ENCODE measurements at regions of chr15 and their contacts with region 1.

Region 1: DNA sequence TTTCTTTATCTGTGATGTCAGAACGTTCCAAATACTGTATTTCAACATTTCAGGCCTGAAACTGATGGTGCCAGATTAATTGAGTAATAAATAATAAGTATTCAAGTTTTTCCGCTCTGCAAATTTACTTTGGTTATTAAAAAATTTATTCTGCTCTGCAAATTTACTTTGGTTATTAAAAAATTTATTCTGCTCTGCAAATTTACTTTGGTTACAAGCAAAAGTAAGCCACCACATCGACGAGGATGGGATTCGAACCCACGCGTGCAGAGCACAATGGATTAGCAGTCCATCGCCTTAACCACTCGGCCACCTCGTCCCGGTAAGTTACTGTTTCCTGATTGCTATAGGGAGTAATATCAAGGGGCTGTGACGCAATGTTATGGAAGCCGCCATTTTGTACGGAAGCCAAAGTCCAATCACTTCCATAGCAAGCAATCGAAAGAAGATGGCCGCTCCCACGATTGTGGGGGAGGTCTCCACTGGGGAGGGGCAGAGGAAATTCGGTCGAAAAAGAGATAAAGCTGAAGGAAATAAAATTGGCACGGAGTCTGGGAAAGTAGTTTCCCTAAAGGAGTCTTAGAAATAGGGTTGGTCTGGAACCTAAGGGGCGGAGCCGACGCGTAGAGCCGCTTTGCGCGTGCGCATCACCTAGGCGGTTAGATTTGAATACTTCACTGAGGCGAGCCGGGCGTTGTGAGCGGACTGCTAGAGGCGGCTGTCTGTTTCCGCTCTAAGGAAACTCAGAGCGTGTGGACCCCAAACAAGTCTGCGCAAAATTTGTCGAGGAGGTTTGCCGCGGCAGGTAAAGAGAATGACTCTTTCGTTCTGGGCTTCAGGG is at the start of gene KNL1:
- DNase-seq: peak; percentile 84
- ATAC-seq: peak; percentile 83
- H3K4me3 Mint-ChIP-seq: peak within 1 kb of the TSS; percentile 95
- H3K27ac Mint-ChIP-seq: peak within 1 kb of the TSS; percentile 99
- H3K4me1 Mint-ChIP-seq: peaks cover 21% of the 10 kb centered on the region
- H3K27me3 Mint-ChIP-seq: peaks cover 2% of the 10 kb centered on the region
- CTCF ChIP-seq: no peak
- total RNA-seq, gene KNL1: 5.1 and 7.7 TPM in 2 replicates

Region 2: GRCh38 chr15:40513609-40514008 is 80.2 kb before region 1 on chr15:
- CTCF ChIA-PET with region 1: interaction called, 24 read pairs
- POLR2A ChIA-PET with region 1: no interaction called
- intact Hi-C with region 1: loop called (anchors 2 kb)
- DNase-seq: no peak
- ATAC-seq: no peak
- H3K4me3 Mint-ChIP-seq: no peak overlapping the region
- H3K27ac Mint-ChIP-seq: no peak overlapping the region
- H3K4me1 Mint-ChIP-seq: peaks cover 20% of the 10 kb centered on the region
- H3K27me3 Mint-ChIP-seq: no peaks in the 10 kb centered on the region
- CTCF ChIP-seq: no peak

Region 3: DNA sequence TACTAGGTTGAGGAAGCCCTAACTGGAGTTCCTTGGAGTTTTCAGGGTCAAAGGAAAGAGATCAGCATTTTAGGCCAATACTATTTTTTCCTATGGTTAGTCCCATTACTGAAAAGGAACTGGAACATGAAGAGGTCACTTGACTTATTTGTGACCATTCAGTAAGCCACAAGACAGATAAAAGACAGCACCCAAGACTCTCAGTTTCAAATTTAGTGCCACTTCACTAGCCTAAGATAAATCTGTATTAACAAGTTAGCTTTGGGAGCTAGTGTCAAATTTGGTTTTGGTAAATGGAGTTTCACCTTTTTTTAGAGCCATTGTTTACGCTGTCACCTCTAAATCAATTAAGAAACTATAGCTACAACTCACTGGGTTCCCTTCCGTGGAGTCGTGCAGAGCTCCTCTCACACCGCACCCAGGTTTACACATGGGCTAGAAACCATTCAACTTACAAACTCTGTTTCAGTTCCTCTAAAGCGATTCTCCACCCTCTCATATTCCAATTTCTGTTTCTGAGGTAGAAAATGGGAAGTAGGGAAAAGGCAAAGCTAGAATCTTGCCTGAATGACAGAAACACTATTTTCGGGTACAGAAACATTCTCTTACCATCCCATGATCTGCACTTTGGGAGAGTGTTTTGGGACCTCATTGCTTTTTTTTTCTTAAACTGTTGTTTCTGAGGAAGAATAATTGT is 43.3 kb before region 1 on chr15:
- CTCF ChIA-PET with region 1: interaction called, 3 read pairs
- POLR2A ChIA-PET with region 1: interaction called, 4 read pairs
- intact Hi-C with region 1: loop called (anchors 1 kb)
- DNase-seq: no peak
- ATAC-seq: peak; percentile 84
- H3K4me3 Mint-ChIP-seq: peak overlapping the region; percentile 76
- H3K27ac Mint-ChIP-seq: peak overlapping the region; percentile 93
- H3K4me1 Mint-ChIP-seq: peaks cover 92% of the 10 kb centered on the region
- H3K27me3 Mint-ChIP-seq: no peaks in the 10 kb centered on the region
- CTCF ChIP-seq: no peak

Region 4: GRCh38 chr15:40684381-40684780 is 90.6 kb after region 1 on chr15:
- CTCF ChIA-PET with region 1: no interaction called
- POLR2A ChIA-PET with region 1: interaction called, 4 read pairs
- intact Hi-C with region 1: loop called (anchors 2 kb)
- DNase-seq: no peak
- ATAC-seq: no peak
- H3K4me3 Mint-ChIP-seq: no peak overlapping the region
- H3K27ac Mint-ChIP-seq: no peak overlapping the region
- H3K4me1 Mint-ChIP-seq: peaks cover 15% of the 10 kb centered on the region
- H3K27me3 Mint-ChIP-seq: no peaks in the 10 kb centered on the region
- CTCF ChIP-seq: no peak

Region 5: DNA sequence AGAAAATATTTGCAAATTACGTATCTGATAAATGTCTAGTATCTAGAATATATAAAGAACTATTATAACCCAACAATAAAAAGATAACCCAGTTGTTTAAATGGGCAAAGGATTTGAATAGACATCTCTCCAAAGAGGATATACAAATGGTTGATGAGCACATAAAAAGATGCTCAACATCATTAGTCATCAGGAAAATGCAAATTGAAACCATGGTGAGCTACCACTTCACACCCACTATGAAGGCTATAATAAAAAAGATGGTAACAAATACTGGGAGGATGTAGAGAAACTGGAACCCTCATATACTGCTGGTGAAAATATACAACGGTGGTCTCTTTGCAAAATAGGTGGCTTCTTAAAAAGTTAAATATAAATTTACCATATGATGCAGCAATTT is 129.1 kb after region 1 on chr15:
- CTCF ChIA-PET with region 1: no interaction called
- POLR2A ChIA-PET with region 1: no interaction called
- intact Hi-C with region 1: no loop called
- DNase-seq: no peak
- ATAC-seq: no peak
- H3K4me3 Mint-ChIP-seq: no peak overlapping the region
- H3K27ac Mint-ChIP-seq: no peak overlapping the region
- H3K4me1 Mint-ChIP-seq: no peaks in the 10 kb centered on the region
- H3K27me3 Mint-ChIP-seq: no peaks in the 10 kb centered on the region
- CTCF ChIP-seq: no peak

Region 6: DNA sequence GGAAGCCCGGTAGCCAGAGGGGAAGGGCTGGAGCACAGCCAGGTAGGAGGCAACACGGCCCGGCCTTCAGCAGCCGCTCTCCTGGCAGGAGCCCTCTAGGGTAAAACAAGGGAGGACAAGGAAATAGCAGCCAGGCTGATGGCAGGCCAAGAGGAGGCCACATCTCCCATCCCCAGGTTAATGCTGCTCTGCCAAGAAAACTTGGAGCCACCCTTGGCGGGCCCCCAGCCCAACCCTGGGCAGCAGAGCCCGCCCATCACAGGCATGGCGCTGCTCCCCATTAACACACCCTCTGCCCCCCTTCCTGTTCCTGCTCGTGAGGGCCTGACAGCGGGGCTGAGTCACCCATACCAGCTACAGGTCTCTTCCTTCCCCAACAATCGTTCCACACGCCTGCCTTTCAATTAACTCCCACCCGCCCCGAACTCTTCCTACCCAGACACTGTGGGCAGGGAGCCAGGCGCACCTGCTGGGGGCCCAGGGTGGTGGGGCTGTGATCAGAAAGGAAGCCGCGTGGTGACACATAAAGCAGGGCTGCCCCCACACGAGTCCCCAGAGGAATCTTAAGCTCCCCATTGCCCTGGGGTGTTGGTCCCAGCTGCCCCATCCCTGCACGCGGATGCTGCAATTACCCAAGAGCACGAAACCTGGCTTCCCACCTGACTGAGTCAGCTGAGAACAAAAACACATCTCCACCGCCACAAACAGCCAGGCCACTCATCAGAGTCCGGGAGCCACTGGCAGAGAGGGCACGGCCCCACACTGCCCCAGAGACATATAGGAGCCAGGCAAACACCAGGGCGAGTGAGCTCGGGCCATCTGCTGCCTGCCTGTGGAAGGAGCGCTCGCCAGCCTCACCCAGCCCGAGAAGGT is 175.7 kb after region 1 on chr15 and contains the start of gene C15orf62:
- CTCF ChIA-PET with region 1: no interaction called
- POLR2A ChIA-PET with region 1: interaction called, 15 read pairs
- intact Hi-C with region 1: loop called (anchors 1 kb)
- DNase-seq: peak; percentile 81
- ATAC-seq: peak; percentile 84
- H3K4me3 Mint-ChIP-seq: peak within 1 kb of the TSS; percentile 82
- H3K27ac Mint-ChIP-seq: peak within 1 kb of the TSS; percentile 93
- H3K4me1 Mint-ChIP-seq: peaks cover 59% of the 10 kb centered on the region
- H3K27me3 Mint-ChIP-seq: no peaks in the 10 kb centered on the region
- CTCF ChIP-seq: no peak
- total RNA-seq, gene C15orf62: 5.7 and 6.5 TPM in 2 replicates

Region 7: GRCh38 chr15:40789119-40789518 is 195.3 kb after region 1 on chr15:
- CTCF ChIA-PET with region 1: no interaction called
- POLR2A ChIA-PET with region 1: no interaction called
- intact Hi-C with region 1: no loop called
- DNase-seq: no peak
- ATAC-seq: no peak
- H3K4me3 Mint-ChIP-seq: no peak overlapping the region
- H3K27ac Mint-ChIP-seq: no peak overlapping the region
- H3K4me1 Mint-ChIP-seq: peaks cover 11% of the 10 kb centered on the region
- H3K27me3 Mint-ChIP-seq: no peaks in the 10 kb centered on the region
- CTCF ChIP-seq: no peak

Region 8: DNA sequence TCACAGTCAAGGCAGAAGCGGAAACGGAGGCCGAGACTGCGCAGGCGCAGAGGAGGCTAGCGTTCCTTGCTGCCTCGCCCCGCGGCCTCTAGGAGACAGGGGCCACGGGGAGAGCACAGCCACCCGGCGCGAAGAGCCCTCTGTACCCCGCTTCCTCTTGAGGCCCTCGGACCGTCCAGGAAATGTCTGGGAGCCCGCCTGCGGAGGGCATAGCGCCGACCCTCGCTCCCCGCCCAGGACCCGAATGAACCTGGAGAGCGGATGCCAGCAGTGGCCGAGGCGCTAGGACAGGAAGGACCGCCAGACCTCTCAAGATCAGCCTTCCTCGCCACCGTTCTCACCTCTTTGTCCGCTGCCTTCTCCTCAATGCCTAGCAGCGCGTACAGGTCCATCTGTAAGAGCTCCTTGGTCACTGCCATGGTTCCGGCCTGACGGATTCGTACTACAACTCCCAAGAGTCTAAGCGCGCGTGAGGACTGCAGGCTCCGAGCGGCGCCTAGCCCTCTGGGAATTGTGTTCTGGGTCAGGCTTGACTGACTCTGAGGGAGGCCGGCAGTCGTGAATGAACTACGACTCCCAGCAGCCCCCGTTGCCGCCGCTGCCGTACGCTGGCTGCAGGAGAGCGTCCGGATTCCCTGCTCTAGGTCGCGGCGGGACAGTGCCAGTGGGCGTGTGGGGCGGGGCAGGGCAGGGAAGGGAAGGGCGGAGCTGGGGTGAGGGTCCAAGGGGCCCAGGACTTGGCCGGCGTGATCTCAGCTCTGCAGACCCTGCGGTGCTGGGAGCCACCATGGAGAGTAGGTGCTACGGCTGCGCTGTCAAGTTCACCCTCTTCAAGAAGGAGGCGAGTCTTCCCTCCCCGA is 213.4 kb after region 1 on chr15 and contains the starts of genes DNAJC17 and ZFYVE19:
- CTCF ChIA-PET with region 1: no interaction called
- POLR2A ChIA-PET with region 1: interaction called, 10 read pairs
- intact Hi-C with region 1: loop called (anchors 1 kb)
- DNase-seq: peak; percentile 87
- ATAC-seq: peak; percentile 96
- H3K4me3 Mint-ChIP-seq: peak within 1 kb of the TSS; percentile 99
- H3K27ac Mint-ChIP-seq: peak within 1 kb of the TSS; percentile 100
- H3K4me1 Mint-ChIP-seq: peaks cover 24% of the 10 kb centered on the region
- H3K27me3 Mint-ChIP-seq: no peaks in the 10 kb centered on the region
- CTCF ChIP-seq: no peak
- total RNA-seq, gene DNAJC17: 43.1 and 51.0 TPM in 2 replicates
- total RNA-seq, gene ZFYVE19: 23.2 and 25.2 TPM in 2 replicates

Region 9: DNA sequence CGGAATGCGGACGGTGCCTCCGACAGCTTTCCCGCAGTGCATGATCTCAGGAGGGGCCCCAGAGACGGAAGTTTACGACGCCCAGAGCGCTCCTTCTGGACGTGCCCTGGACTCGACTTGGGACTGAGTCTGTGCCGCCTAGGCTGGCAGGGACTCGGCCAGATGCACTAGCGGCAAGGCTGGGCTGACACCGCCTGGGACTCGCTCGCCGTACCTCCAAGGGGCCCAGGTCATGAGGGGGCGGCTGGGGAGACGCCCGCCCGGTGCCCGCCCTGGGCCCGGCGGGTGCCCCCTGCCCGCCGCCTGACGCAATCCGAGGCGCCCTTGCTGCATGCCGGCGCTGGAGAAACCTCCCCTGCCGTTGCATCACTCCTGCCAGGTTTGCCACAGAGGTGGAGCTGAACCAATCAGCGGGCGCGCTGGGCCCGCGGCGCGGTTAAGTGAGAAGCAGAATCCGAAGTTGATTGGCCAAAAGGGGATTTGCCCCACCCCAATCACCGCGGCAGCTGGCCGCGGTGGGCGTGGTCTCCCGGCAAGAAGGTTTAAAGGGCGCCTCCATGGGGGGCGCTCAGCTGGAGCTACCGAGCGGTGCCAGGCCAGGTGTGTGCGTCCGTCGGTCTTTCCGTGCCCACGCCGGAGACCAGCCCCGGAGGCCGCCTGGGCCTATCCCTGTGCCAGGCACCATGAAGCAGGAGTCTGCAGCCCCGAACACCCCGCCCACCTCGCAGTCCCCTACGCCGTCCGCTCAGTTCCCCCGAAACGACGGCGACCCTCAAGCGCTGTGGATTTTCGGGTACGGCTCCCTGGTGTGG is 359.3 kb after region 1 on chr15 and contains the start of gene CHAC1:
- CTCF ChIA-PET with region 1: no interaction called
- POLR2A ChIA-PET with region 1: interaction called, 3 read pairs
- intact Hi-C with region 1: loop called (anchors 5 kb)
- DNase-seq: peak; percentile 88
- ATAC-seq: peak; percentile 94
- H3K4me3 Mint-ChIP-seq: peak within 1 kb of the TSS; percentile 93
- H3K27ac Mint-ChIP-seq: peak within 1 kb of the TSS; percentile 92
- H3K4me1 Mint-ChIP-seq: peaks cover 23% of the 10 kb centered on the region
- H3K27me3 Mint-ChIP-seq: peaks cover 7% of the 10 kb centered on the region
- CTCF ChIP-seq: no peak
- total RNA-seq, gene CHAC1: 22.3 and 27.3 TPM in 2 replicates

Measured in activated B cell treated with CpG ODN at 0.5 μM for 24 hours (primary cell).